SK-N-SH (cell line): ENCODE measurements at regions of chr22 and their contacts with region 1.

Region 1: GRCh38 chr22:37199103-37199759 is 11.2 kb upstream of the C1QTNF6 start:
- DNase-seq: peak; percentile 97
- H3K4me3 ChIP-seq: peak overlapping the region; percentile 72 to 76
- H3K27ac ChIP-seq: peak overlapping the region; percentile 73 to 96
- H3K4me1 ChIP-seq: peaks cover 19 to 28% of the 10 kb centered on the region in 2 experiments
- H3K27me3 ChIP-seq: no peaks in the 10 kb centered on the region
- CTCF ChIP-seq: peak; percentile 82
- EP300 ChIP-seq: no peak
- RAD21 ChIP-seq: peak; percentile 76

Region 2: DNA sequence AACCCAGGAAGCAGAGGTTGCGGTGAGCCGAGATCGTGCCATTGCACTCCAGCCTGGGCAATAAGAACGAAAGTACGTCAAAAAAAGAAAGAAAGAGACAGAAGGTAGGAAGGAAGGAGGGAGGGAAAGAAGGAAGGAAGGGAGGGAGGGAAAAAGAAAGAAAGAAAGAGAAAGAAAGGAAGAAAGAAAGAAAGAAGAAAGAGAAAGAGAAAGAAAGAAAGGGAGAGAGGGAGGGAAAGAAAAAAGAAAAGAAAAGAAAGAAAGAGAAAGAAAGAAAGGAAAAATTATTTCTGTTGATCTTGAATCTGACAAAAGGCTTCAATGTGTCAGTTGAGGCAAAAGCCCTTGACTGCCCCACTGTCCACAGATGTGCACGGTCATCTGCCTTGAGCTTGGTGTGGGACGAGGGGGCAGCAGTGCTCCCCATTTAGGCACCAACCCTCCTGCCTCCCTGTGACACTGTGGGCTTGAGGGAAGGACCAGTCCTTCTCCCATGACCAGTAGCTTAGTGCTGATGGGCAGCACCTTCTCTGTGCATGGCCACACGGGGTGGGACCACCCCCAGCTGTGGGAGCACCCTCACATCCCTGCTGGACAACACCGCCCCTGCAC is 123.3 kb before region 1 on chr22:
- CTCF ChIA-PET with region 1: interaction called, 26 read pairs
- POLR2A ChIA-PET with region 1: no interaction called
- DNase-seq: no peak
- H3K4me3 ChIP-seq: no peak overlapping the region
- H3K27ac ChIP-seq: no peak overlapping the region
- H3K4me1 ChIP-seq: no peaks in the 10 kb centered on the region
- H3K27me3 ChIP-seq: peaks cover 30% of the 10 kb centered on the region
- CTCF ChIP-seq: no peak
- EP300 ChIP-seq: no peak
- RAD21 ChIP-seq: no peak

Region 3: GRCh38 chr22:37166675-37167066 is 32.6 kb before region 1 on chr22:
- CTCF ChIA-PET with region 1: interaction called, 190 read pairs
- POLR2A ChIA-PET with region 1: no interaction called
- DNase-seq: peak; percentile 93
- H3K4me3 ChIP-seq: no peak overlapping the region
- H3K27ac ChIP-seq: no peak overlapping the region
- H3K4me1 ChIP-seq: peaks cover 0 to 17% of the 10 kb centered on the region in 2 experiments; a peak in 1 of 4 replicates
- H3K27me3 ChIP-seq: no peaks in the 10 kb centered on the region
- CTCF ChIP-seq: peak; percentile 88
- EP300 ChIP-seq: no peak
- RAD21 ChIP-seq: peak; percentile 84

Region 4: DNA sequence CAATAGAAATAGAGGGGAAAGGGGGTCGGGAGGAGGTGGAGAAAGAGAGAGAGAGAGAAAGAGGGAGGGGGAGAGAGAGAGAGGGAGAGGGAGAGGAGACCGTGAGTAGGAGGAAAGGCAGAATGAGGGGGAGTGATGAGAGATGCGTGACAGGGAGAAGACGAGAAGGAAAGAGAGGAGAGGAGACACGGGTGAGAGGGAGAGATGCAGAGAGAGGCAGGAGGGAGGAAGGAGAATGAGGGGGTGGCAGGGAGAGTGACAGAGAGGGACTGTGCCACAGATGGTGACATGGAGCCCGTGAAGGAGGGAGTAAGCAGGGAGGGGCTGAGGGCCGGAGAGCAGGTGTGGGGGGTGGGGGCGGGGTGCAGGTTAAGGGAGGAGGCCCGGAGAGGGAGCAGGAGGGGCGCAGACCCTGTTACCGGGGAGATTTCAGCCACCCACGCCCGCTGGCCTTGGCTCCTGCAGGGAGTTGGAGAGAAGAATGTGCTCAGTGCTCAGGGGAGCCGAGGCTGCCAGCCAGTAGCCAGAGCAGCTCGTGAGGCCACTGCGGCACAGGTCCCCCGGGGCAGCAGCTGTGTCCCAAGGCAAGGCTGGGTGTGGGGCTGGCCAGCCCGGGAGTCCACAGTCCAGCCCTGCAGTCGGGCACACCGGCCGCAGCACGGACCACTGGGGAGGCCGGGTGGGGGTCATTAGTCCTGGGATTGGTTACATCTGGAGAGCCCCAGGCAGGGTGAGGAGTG is 13.1 kb after region 1 on chr22 and contains the start of gene SSTR3:
- CTCF ChIA-PET with region 1: interaction called, 54 read pairs
- POLR2A ChIA-PET with region 1: no interaction called
- DNase-seq: peak; percentile 84
- H3K4me3 ChIP-seq: no peak within 1 kb of the TSS
- H3K27ac ChIP-seq: no peak within 1 kb of the TSS
- H3K4me1 ChIP-seq: peaks cover 0 to 10% of the 10 kb centered on the region in 2 experiments; a peak in 1 of 4 replicates
- H3K27me3 ChIP-seq: no peaks in the 10 kb centered on the region; the same call in 1 of the 2 replicates
- CTCF ChIP-seq: no peak
- EP300 ChIP-seq: no peak
- RAD21 ChIP-seq: no peak
- polyA plus RNA-seq, gene SSTR3: 0.02 TPM in 1 of 2 replicates, not detected in the other

Region 5: DNA sequence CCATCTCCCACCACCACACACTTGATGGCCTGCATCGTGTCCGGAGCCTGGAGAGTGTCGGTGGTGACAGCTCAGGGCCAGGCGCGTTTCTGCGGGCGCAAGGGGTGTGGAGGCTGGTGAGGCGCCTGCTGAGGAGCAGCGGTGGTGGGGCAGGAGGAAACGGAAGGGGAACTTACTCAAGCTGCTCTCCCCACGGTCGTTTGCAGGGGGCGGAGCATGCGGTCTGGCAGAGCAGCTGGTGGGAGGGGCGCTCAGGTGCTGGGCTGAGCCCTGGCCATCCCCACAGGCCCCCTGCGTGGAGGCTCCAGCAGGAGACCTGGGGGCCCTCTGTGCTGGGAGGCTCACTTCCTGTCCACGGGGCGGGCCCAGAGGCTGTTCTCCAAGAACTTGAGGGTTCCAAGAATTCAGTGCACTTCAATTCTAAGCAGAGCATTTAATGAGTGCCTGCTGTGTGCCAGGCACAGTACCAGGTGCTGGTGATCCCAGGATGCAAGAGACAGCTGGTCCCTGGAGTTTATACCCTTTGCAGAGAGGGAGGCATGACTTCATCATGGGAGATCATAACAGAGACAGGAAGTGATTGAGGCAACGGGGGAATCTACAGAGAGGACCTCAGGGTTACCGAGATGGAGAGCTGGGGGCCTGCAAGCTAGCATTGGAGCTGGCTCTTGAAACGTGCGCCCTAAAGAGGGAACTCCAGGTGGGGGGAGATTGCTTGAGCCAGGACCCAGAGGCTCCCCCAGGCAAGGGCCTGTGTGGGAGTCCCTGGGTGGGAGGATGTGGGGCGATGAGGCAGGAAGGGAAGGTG is 45.1 kb after region 1 on chr22 and contains the start of gene RAC2:
- CTCF ChIA-PET with region 1: interaction called, 12 read pairs
- POLR2A ChIA-PET with region 1: interaction called, 3 read pairs
- DNase-seq: peak; percentile 57
- H3K4me3 ChIP-seq: peak within 1 kb of the TSS in 1 of 2 experiments; percentile 38; a peak in 2 of 4 replicates
- H3K27ac ChIP-seq: no peak within 1 kb of the TSS
- H3K4me1 ChIP-seq: peaks cover 7 to 11% of the 10 kb centered on the region in 2 experiments; a peak in 3 of 4 replicates
- H3K27me3 ChIP-seq: no peaks in the 10 kb centered on the region
- CTCF ChIP-seq: no peak
- EP300 ChIP-seq: no peak
- RAD21 ChIP-seq: no peak
- polyA plus RNA-seq, gene RAC2: 22.6 and 29.9 TPM in 2 replicates

Region 6: GRCh38 chr22:37345863-37346504 is 146.8 kb after region 1 on chr22:
- CTCF ChIA-PET with region 1: no interaction called
- POLR2A ChIA-PET with region 1: no interaction called
- DNase-seq: peak; percentile 76
- H3K4me3 ChIP-seq: no peak overlapping the region
- H3K27ac ChIP-seq: peak overlapping the region in 1 of 2 experiments; percentile 51; a peak in 3 of 4 replicates
- H3K4me1 ChIP-seq: peaks cover 5 to 26% of the 10 kb centered on the region in 2 experiments; a peak in 1 of 4 replicates
- H3K27me3 ChIP-seq: no peaks in the 10 kb centered on the region
- CTCF ChIP-seq: no peak
- EP300 ChIP-seq: peak in 1 of 2 experiments; percentile 26; a peak in 1 of 4 replicates
- RAD21 ChIP-seq: no peak